Activated naive CD8-positive, alpha-beta T cell treated with anti-CD3 and anti-CD28 coated beads, Interleukin-2, amount 10 ng/mL, durations not matched to agents 7 days and 5 days (primary cell): ENCODE measurements at regions of chr17 and their contacts with region 1.

Region 1: DNA sequence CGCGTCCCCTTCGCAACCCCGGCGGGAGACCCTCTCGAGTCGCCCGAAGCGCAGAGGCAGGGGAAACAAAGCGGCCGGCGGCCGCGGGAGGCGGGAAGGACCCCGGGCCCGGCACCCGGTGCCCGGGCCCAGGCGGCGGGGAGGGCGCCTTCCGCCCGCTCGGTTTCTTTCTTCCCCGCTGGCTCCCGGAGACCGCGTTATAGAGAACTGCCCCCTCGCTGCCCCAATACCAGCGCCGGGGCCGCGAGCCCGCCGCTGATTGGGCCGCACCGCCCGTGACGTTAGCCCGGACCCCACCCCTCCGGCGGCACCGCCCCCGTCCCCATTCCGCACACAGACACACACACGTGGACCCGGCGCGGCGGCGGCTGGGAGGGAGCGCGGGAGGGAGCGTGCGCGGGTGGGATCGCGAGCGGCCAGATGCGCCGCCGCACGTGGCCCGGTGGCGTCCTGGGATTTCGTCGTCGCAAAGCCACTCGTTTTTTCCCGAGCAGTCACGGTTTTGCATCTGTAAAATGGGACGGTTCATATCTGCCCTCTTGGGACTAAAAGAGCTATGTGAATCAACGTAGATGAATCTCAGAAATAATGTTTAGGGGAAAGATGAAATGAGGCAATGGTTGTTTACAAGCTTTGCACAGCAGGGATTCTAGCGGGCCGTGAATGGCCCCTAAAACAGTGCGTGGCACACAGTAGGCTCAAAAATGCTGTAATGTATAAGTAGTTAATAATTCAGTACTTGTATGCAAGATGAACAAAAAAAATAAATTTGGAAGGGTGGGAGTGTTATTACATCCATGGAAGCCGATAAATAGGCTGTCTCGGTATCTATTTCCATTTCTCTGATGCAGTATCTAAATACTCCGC is at the start of gene EPOP:
- DNase-seq: peak; percentile 92
- ATAC-seq: peak; percentile 88
- H3K4me3 Mint-ChIP-seq: peak within 1 kb of the TSS; percentile 68
- H3K27ac Mint-ChIP-seq: peak within 1 kb of the TSS; percentile 33
- H3K4me1 Mint-ChIP-seq: peaks cover 31% of the 10 kb centered on the region
- H3K27me3 Mint-ChIP-seq: peaks cover 24% of the 10 kb centered on the region
- total RNA-seq, gene EPOP: 7.2 TPM

Region 2: DNA sequence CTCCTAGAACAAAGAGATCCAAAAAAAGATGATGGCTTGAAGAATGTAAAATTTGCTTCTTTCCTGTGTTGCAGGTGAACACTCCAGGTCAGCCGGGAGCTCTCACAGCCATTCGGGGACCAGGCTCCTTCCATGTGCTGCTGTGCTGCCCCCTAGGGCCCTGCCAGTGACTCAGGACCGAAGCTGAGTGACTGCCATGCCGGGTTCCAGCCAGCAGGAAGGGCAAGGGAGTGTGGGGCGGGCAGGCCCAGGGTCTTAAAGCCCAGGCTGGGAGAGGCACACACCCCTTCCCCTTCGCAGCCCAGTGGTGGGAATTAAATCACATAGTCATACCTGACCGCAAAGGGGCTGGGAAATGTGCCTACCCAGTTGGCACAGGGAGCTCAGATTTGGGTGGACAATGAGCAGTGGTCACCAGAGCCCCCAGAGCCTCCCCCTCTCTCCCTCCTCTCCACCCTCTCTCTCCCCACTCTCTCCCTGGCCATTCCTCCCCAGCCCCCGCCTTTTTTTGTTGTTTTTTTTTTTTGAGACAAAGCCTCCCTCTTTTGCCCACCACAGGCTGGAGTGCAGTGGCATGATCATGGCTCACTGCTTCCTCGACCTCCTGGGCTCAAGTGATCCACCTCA is 11.7 kb before region 1 on chr17:
- POLR2A ChIA-PET with region 1: no interaction called
- DNase-seq: peak; percentile 61
- ATAC-seq: peak; percentile 68
- H3K4me3 Mint-ChIP-seq: no peak overlapping the region
- H3K27ac Mint-ChIP-seq: no peak overlapping the region
- H3K4me1 Mint-ChIP-seq: peaks cover 9% of the 10 kb centered on the region
- H3K27me3 Mint-ChIP-seq: peaks cover 16% of the 10 kb centered on the region

Region 3: GRCh38 chr17:38735161-38735997 is 60.4 kb after region 1 on chr17:
- POLR2A ChIA-PET with region 1: interaction called, 32 read pairs
- DNase-seq: peak; percentile 79
- ATAC-seq: no peak
- H3K4me3 Mint-ChIP-seq: no peak overlapping the region
- H3K27ac Mint-ChIP-seq: no peak overlapping the region
- H3K4me1 Mint-ChIP-seq: peaks cover 25% of the 10 kb centered on the region
- H3K27me3 Mint-ChIP-seq: no peaks in the 10 kb centered on the region

Region 4: DNA sequence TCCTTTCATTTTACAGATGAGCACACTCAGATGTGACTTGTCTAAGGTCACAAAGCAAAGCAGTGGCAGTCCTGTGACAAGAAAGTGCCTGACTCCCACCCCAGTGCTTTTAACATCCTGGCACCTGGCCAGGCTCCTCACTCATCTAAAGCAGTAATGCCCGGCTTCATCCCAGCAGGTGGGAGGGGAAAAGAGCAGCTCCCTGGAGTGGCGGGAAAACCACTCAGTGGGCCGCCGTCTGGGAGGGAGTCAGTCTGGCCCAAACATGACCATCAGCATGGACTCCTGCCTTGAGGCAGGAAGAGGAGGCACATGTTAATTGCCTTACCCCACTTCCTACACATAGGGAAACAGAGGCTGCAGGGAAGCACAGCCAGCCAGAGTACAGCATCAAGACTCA is 70.6 kb after region 1 on chr17:
- POLR2A ChIA-PET with region 1: no interaction called
- DNase-seq: no peak
- ATAC-seq: no peak
- H3K4me3 Mint-ChIP-seq: no peak overlapping the region
- H3K27ac Mint-ChIP-seq: no peak overlapping the region
- H3K4me1 Mint-ChIP-seq: peaks cover 17% of the 10 kb centered on the region
- H3K27me3 Mint-ChIP-seq: peaks cover 33% of the 10 kb centered on the region